B cell (primary cell): ENCODE measurements at regions of chr12 and their contacts with region 1.

Region 1: GRCh38 chr12:53746592-53747092 is 5.1 kb downstream of the CISTR start:
- DNase-seq: peak; percentile 90
- ATAC-seq: peak; percentile 70
- H3K4me3 ChIP-seq: no peak overlapping the region
- H3K4me3 Mint-ChIP-seq: peak overlapping the region; percentile 63
- H3K27ac ChIP-seq: no peak overlapping the region
- H3K27ac Mint-ChIP-seq: peak overlapping the region; percentile 47
- H3K4me1 ChIP-seq: peaks cover 33 to 43% of the 10 kb centered on the region in 2 donors
- H3K4me1 Mint-ChIP-seq: peaks cover 16% of the 10 kb centered on the region
- H3K27me3 ChIP-seq: peaks cover 0 to 64% (median 45%) of the 10 kb centered on the region in 4 experiments
- H3K27me3 Mint-ChIP-seq: peaks cover 50% of the 10 kb centered on the region
- CTCF ChIP-seq: peak; percentile 100

Region 2: GRCh38 chr12:53543539-53543938 is 203.1 kb before region 1 on chr12:
- CTCF ChIA-PET with region 1: interaction called, 16 read pairs
- POLR2A ChIA-PET with region 1: no interaction called
- intact Hi-C with region 1: loop called (anchors 2 kb)
- DNase-seq: peak; percentile 61
- ATAC-seq: peak; percentile 81
- H3K4me3 ChIP-seq: no peak overlapping the region
- H3K4me3 Mint-ChIP-seq: no peak overlapping the region
- H3K27ac ChIP-seq: peak overlapping the region in 1 of 2 donors; percentile 44
- H3K27ac Mint-ChIP-seq: peak overlapping the region; percentile 5
- H3K4me1 ChIP-seq: no peaks in the 10 kb centered on the region
- H3K4me1 Mint-ChIP-seq: peaks cover 5% of the 10 kb centered on the region
- H3K27me3 ChIP-seq: no peaks in the 10 kb centered on the region
- H3K27me3 Mint-ChIP-seq: no peaks in the 10 kb centered on the region
- CTCF ChIP-seq: peak; percentile 71

Region 3: GRCh38 chr12:53696285-53696654 is 50.4 kb before region 1 on chr12:
- CTCF ChIA-PET with region 1: interaction called, 143 read pairs
- POLR2A ChIA-PET with region 1: no interaction called
- intact Hi-C with region 1: loop called (anchors 1 kb)
- DNase-seq: peak; percentile 48
- ATAC-seq: peak; percentile 46
- H3K4me3 ChIP-seq: peak overlapping the region in 1 of 5 experiments; percentile 32
- H3K4me3 Mint-ChIP-seq: peak overlapping the region; percentile 77
- H3K27ac ChIP-seq: no peak overlapping the region
- H3K27ac Mint-ChIP-seq: no peak overlapping the region
- H3K4me1 ChIP-seq: peaks cover 29 to 38% of the 10 kb centered on the region in 2 donors
- H3K4me1 Mint-ChIP-seq: peaks cover 30% of the 10 kb centered on the region
- H3K27me3 ChIP-seq: peaks cover 3 to 81% (median 69%) of the 10 kb centered on the region in 4 experiments
- H3K27me3 Mint-ChIP-seq: peaks cover 78% of the 10 kb centered on the region
- CTCF ChIP-seq: no peak

Region 4: GRCh38 chr12:53719649-53720048 is 27.0 kb before region 1 on chr12:
- CTCF ChIA-PET with region 1: interaction called, 254 read pairs
- POLR2A ChIA-PET with region 1: no interaction called
- intact Hi-C with region 1: no loop called
- DNase-seq: no peak
- ATAC-seq: no peak
- H3K4me3 ChIP-seq: no peak overlapping the region
- H3K4me3 Mint-ChIP-seq: no peak overlapping the region
- H3K27ac ChIP-seq: no peak overlapping the region
- H3K27ac Mint-ChIP-seq: no peak overlapping the region
- H3K4me1 ChIP-seq: no peaks in the 10 kb centered on the region
- H3K4me1 Mint-ChIP-seq: no peaks in the 10 kb centered on the region
- H3K27me3 ChIP-seq: no peaks in the 10 kb centered on the region
- H3K27me3 Mint-ChIP-seq: no peaks in the 10 kb centered on the region
- CTCF ChIP-seq: no peak

Region 5: DNA sequence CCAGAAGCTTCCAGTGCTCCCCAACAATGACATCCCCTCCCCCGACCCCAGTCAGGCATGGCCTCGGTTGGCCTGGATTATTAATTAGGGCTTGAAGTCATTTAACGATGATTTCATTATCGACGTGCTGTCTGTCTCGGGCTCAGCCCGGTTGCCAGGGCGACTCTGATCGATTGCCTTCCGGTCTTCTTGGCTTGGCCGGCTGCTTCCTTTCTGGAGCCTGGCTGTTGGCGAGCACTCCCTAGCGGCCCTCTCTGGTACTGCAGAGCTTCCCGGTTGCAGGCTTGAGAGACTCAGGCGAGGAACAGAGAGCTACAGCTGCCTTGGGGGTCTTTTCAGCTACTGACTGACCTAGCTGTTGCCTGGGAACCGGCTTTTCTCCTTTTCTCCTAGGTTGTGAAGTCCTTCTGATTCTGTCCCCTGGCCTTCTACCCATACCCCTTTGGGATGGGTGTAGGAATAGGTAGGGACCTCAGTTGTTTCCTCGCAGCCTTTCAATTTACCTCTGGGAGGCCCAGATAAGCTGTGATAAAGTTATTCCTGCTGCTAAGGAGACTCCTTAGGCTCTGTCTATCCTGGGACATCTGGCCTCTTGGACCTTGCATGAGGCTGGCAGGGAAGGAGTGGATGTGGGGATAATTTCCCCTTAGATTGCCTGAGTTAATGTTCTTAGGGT is 10.6 kb after region 1 on chr12:
- CTCF ChIA-PET with region 1: interaction called, 191 read pairs
- POLR2A ChIA-PET with region 1: interaction called, 8 read pairs
- intact Hi-C with region 1: loop called (anchors 1 kb)
- DNase-seq: peak; percentile 83
- ATAC-seq: peak; percentile 66
- H3K4me3 ChIP-seq: no peak overlapping the region
- H3K4me3 Mint-ChIP-seq: peak overlapping the region; percentile 54
- H3K27ac ChIP-seq: no peak overlapping the region
- H3K27ac Mint-ChIP-seq: no peak overlapping the region
- H3K4me1 ChIP-seq: peaks cover 53 to 61% of the 10 kb centered on the region in 2 donors
- H3K4me1 Mint-ChIP-seq: peaks cover 20% of the 10 kb centered on the region
- H3K27me3 ChIP-seq: peaks cover 0 to 34% (median 10%) of the 10 kb centered on the region in 4 experiments
- H3K27me3 Mint-ChIP-seq: peaks cover 34% of the 10 kb centered on the region
- CTCF ChIP-seq: peak; percentile 93

Region 6: GRCh38 chr12:54191550-54192022 is 444.9 kb after region 1 on chr12:
- CTCF ChIA-PET with region 1: interaction called, 11 read pairs
- POLR2A ChIA-PET with region 1: no interaction called
- intact Hi-C with region 1: no loop called
- DNase-seq: peak; percentile 90
- ATAC-seq: peak; percentile 64
- H3K4me3 ChIP-seq: no peak overlapping the region
- H3K4me3 Mint-ChIP-seq: no peak overlapping the region
- H3K27ac ChIP-seq: no peak overlapping the region
- H3K27ac Mint-ChIP-seq: peak overlapping the region; percentile 61
- H3K4me1 ChIP-seq: peaks cover 27 to 42% of the 10 kb centered on the region in 2 donors
- H3K4me1 Mint-ChIP-seq: peaks cover 41% of the 10 kb centered on the region
- H3K27me3 ChIP-seq: peaks cover 0 to 42% (median 12%) of the 10 kb centered on the region in 4 experiments
- H3K27me3 Mint-ChIP-seq: peaks cover 35% of the 10 kb centered on the region
- CTCF ChIP-seq: peak; percentile 77

Region 7: GRCh38 chr12:54214553-54215406 is 468.1 kb after region 1 on chr12:
- CTCF ChIA-PET with region 1: interaction called, 6 read pairs
- POLR2A ChIA-PET with region 1: no interaction called
- intact Hi-C with region 1: loop called (anchors 2 kb)
- DNase-seq: peak; percentile 95
- ATAC-seq: peak; percentile 83
- H3K4me3 ChIP-seq: peak overlapping the region; percentile 3 to 58 (median 46)
- H3K4me3 Mint-ChIP-seq: peak overlapping the region; percentile 90
- H3K27ac ChIP-seq: no peak overlapping the region
- H3K27ac Mint-ChIP-seq: peak overlapping the region; percentile 33
- H3K4me1 ChIP-seq: peaks cover 36 to 46% of the 10 kb centered on the region in 2 donors
- H3K4me1 Mint-ChIP-seq: peaks cover 44% of the 10 kb centered on the region
- H3K27me3 ChIP-seq: peaks cover 0 to 30% (median 6%) of the 10 kb centered on the region in 4 experiments
- H3K27me3 Mint-ChIP-seq: peaks cover 6% of the 10 kb centered on the region
- CTCF ChIP-seq: peak; percentile 100